Activated naive CD4-positive, alpha-beta T cell treated with anti-CD3 and anti-CD28 coated beads for 36 hours (primary cell): ENCODE measurements at regions of chr12 and their contacts with region 1.

Region 1: GRCh38 chr12:53561590-53561953 is 54.3 kb upstream of the NPFF start:
- DNase-seq: no peak
- H3K4me3 Mint-ChIP-seq: no peak overlapping the region
- H3K27ac Mint-ChIP-seq: peak overlapping the region; percentile 81
- H3K4me1 Mint-ChIP-seq: peaks cover 67% of the 10 kb centered on the region
- H3K27me3 Mint-ChIP-seq: no peaks in the 10 kb centered on the region

Region 2: DNA sequence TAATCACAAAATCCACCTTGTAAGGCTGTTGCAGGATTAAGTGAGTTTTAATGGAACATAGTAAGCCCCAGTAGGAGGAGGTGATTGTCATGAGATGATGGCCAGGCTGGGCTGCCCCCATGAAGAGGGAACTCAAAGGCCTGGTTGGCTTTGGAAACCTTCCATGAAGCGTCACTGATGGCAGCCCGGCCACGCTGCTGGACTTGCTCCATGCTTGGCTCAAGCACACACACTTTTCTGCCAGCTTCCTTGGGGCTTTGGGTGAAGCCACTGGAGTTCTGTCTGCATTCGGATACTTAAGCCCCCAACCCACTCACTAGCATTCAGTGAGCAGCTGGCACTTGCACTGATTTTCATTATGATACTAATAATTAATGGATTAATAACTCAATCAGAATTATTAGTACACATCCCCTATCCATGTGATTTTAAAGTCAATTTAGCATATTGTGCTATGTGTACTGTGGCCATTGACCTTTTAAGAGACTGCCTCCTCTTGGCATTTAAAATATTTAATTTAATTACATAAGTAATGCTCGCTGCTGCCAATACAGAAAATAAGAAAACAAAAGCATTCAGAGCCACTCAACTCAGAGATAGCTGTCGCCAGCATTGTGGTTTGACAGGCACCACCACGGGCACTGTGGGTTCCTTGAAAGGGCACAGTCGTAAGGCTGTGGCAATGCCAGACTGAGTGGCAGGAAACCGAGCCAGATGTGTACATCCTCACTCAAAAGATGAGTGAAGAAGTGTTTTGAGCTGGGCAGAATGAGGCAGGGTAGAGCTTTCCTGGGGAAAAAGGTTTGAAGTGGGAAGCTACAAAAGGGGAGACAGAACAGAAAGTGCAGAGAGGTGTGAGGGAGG is 1210.1 kb before region 1 on chr12:
- CTCF ChIA-PET with region 1: no interaction called
- intact Hi-C with region 1: no loop called
- DNase-seq: peak; percentile 42
- H3K4me3 Mint-ChIP-seq: no peak overlapping the region
- H3K27ac Mint-ChIP-seq: no peak overlapping the region
- H3K4me1 Mint-ChIP-seq: peaks cover 15% of the 10 kb centered on the region
- H3K27me3 Mint-ChIP-seq: no peaks in the 10 kb centered on the region

Region 3: DNA sequence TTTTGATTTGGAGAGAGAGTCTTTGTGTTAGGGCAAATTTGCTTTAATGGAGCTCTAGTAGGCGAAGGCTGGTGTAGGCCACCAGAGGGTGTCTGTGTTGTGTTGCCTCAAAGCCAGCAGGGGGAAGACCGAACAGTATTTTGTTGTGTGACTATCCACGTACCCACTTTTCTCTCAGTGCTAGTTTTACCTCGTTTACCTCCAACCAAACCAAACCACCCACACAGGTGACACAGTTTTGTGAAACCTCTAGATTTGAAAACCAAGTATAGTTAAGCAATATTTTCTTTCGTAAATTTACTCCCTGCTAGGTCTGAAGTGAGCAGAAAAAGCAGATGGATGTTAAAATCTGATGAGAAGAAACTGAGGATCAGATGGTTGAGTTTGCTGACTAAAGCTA is 18.0 kb before region 1 on chr12:
- CTCF ChIA-PET with region 1: interaction called, 14 read pairs
- intact Hi-C with region 1: no loop called
- DNase-seq: peak; percentile 77
- H3K4me3 Mint-ChIP-seq: no peak overlapping the region
- H3K27ac Mint-ChIP-seq: peak overlapping the region; percentile 26
- H3K4me1 Mint-ChIP-seq: peaks cover 13% of the 10 kb centered on the region
- H3K27me3 Mint-ChIP-seq: no peaks in the 10 kb centered on the region

Region 4: GRCh38 chr12:53577941-53578352 is 16.4 kb after region 1 on chr12:
- CTCF ChIA-PET with region 1: no interaction called
- intact Hi-C with region 1: loop called (anchors 1 kb)
- DNase-seq: no peak
- H3K4me3 Mint-ChIP-seq: no peak overlapping the region
- H3K27ac Mint-ChIP-seq: no peak overlapping the region
- H3K4me1 Mint-ChIP-seq: peaks cover 37% of the 10 kb centered on the region
- H3K27me3 Mint-ChIP-seq: no peaks in the 10 kb centered on the region

Region 5: DNA sequence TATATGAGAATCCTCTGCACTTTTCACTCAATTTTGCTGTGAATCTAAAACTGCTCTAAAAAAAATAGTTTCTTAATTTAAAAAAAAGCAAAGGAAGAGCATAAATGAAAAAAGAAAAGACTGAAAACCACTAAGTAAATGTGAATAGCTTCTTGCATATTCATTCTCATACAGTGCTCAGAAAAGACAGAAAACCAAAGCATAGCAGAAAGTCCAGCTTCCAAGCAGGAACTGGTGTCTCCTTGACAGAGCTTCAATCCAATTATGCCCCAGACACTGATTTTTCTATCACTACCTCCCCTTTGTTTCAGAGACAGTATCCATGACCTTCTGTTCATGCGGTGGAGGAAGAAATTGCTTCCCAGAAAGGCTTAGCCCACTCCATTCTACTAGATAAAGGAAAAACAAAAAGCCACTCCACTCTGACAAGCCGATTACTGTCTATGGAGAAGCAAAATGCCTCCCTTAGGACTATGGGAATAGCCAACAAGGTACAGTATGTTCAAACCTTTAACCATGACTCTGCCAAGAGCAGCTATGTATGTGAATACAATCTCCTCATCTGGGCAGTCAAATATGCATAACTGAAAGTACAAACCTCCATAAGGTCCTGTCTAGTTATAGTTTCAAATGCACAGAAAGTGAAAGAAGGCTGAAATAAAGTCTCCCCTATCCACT is 24.0 kb after region 1 on chr12:
- CTCF ChIA-PET with region 1: no interaction called
- intact Hi-C with region 1: loop called (anchors 1 kb)
- DNase-seq: no peak
- H3K4me3 Mint-ChIP-seq: no peak overlapping the region
- H3K27ac Mint-ChIP-seq: no peak overlapping the region
- H3K4me1 Mint-ChIP-seq: peaks cover 29% of the 10 kb centered on the region
- H3K27me3 Mint-ChIP-seq: no peaks in the 10 kb centered on the region

Region 6: GRCh38 chr12:53613821-53614220 is 52.2 kb after region 1 on chr12:
- CTCF ChIA-PET with region 1: interaction called, 6 read pairs
- intact Hi-C with region 1: loop called (anchors 1 kb)
- DNase-seq: no peak
- H3K4me3 Mint-ChIP-seq: no peak overlapping the region
- H3K27ac Mint-ChIP-seq: no peak overlapping the region
- H3K4me1 Mint-ChIP-seq: peaks cover 34% of the 10 kb centered on the region
- H3K27me3 Mint-ChIP-seq: no peaks in the 10 kb centered on the region